ENCODE measurements at regions of chr18 and their contacts with region 1.

Region 1: DNA sequence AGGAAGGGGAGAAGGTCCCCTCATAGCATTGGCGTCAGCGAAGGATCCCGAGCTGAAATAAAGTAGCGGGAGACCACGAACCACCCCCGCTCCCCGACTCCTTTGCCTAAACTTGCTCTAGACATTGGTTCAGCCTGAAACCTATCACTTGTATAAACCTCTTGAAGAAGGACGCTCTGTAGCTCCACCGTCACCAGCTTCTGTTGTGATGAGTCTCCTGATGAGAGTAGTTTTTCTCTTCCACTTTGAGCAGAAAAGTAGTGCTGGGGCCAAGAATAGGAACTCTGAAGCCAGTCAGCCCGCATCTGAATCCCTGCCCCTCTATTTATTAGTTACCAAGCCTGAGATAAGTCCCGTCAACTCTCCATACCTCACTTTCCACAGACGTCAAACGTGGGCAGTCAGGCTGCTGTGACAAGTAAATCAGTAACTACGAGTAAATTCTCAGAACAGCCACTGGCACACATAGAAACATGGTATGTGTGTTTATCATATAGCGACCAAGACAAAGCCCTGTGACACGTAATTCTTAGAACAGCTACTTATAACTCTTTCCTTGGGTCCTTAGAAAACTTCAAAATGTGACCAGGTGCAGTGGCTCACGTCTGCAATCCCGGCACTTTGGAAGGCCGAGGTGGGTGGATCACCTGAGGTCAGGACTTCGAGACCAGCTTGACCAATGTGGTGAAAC is 61.7 kb downstream of the CD226 start:
- DNase-seq: no peak
- H3K4me3 Mint-ChIP-seq: peak overlapping the region; percentile 87
- H3K27ac Mint-ChIP-seq: peak overlapping the region; percentile 100
- H3K4me1 Mint-ChIP-seq: peaks cover 77% of the 10 kb centered on the region
- H3K27me3 Mint-ChIP-seq: no peaks in the 10 kb centered on the region

Region 2: DNA sequence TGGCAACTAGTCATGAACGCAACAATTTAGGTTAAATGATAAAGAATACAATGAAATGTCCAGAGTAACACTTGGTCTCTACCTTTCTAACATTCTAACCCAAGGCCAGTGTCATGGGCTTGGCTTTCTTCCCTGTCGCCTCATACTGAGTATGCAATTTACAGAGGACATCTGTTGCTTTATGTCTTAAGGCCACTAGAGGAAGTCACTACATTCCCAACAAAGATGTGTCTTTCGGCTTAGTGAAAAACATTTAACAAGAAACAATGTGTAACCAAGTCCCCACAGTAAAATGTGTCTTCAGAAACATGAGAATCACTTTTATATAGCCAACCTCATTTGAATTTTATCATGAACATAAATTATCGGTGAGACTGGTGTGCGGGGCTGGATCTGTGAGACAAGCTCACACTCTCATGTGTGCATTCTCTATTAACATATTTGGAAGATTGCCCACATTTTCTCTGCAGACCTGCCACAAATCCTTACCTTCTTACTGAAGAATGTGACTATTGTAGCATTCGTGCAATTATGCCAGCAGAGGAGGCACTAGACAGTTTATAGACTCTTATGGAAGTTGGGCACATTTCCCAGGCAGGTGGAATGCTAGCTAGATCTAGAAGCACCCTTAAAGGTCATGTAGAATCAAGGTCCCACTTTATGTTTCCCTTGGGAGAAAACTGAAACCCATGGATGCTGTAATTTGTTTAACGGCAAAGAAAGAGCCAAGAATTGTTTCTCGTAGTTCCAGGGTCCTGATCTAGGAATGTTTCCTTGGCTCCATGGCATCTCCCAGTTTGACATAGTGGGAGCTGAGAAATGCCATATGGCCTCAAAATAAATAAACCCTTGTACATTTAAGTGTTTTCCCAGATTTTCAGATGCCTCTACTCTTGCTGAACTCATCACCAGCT is 40.1 kb before region 1 on chr18:
- intact Hi-C with region 1: loop called (anchors 2 kb)
- DNase-seq: no peak
- H3K4me3 Mint-ChIP-seq: no peak overlapping the region
- H3K27ac Mint-ChIP-seq: no peak overlapping the region
- H3K4me1 Mint-ChIP-seq: no peaks in the 10 kb centered on the region
- H3K27me3 Mint-ChIP-seq: peaks cover 2% of the 10 kb centered on the region

Region 3: GRCh38 chr18:69898241-69898861 is 12.4 kb after region 1 on chr18:
- intact Hi-C with region 1: loop called (anchors 1 kb)
- DNase-seq: no peak
- H3K4me3 Mint-ChIP-seq: peak overlapping the region; percentile 78
- H3K27ac Mint-ChIP-seq: peak overlapping the region; percentile 97
- H3K4me1 Mint-ChIP-seq: peaks cover 78% of the 10 kb centered on the region
- H3K27me3 Mint-ChIP-seq: no peaks in the 10 kb centered on the region

Region 4: DNA sequence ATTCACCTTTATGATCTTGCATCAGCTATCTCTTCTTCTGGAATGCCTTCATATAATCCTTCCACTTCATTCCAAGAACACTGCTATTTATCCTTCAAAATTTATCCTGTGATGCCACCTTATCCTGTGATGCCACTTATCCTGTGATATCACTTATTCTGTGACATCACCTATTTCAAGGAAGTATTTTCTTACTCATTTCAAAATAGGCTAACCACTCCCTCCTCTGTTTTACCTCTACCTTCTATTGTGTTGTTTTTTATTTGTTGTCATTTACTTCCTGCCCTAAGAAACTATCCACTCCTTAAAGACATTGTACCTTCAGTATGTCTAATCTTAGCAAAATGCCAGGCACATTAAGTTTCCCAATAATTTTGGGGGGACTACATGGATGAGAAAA is 22.9 kb after region 1 on chr18:
- intact Hi-C with region 1: loop called (anchors 1 kb)
- DNase-seq: no peak
- H3K4me3 Mint-ChIP-seq: peak overlapping the region; percentile 40
- H3K27ac Mint-ChIP-seq: peak overlapping the region; percentile 59
- H3K4me1 Mint-ChIP-seq: peaks cover 52% of the 10 kb centered on the region
- H3K27me3 Mint-ChIP-seq: no peaks in the 10 kb centered on the region

Region 5: DNA sequence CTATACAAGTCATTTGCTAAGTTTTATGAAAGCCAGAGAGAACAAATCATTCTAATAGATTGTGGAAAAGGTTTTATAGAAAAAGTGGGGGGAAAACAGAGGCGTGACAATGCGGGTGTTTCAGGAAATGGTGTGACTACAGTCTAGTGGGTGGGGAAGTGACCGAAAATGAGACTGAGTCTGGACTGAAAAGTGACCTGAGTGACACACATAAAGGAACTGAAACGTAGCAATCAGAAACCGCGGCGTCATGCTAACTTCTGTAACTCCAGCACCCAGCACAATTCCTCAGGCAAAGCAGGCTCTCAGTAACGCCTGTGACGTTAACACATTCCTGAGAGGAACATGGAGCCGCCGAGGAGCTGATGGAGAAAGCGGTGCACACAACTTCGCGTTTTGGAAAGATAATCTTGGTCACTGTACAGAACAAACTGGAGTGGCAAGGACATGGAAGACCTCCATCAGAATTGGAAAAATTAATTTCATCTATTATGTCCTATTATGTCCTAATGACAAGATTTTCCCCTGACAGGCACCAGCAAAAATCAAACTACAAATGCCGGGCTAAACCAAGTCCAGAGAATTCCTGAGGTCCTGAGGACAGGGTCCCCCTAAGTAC is 63.0 kb after region 1 on chr18:
- intact Hi-C with region 1: loop called (anchors 1 kb)
- DNase-seq: peak; percentile 40
- H3K4me3 Mint-ChIP-seq: no peak overlapping the region
- H3K27ac Mint-ChIP-seq: no peak overlapping the region
- H3K4me1 Mint-ChIP-seq: peaks cover 35% of the 10 kb centered on the region
- H3K27me3 Mint-ChIP-seq: no peaks in the 10 kb centered on the region

Region 6: DNA sequence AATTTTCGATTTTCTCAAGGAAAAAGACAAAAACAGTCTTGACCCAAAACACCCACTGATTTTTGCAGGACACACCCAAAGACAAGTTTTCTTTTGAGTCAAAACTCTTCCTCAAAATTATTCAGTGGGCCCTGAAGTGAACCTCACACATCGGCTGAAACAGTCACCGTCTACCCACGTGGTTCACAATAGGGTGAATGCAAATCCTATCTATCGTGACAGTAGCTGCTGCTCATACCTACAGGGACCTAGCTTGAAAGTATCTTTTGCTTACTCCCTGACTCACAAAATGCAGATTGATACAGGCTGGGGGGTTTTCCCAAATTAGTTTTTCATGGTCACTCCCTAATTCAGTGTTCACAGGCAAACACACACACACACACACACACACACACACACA is 72.4 kb after region 1 on chr18:
- intact Hi-C with region 1: loop called (anchors 1 kb)
- DNase-seq: no peak
- H3K4me3 Mint-ChIP-seq: no peak overlapping the region
- H3K27ac Mint-ChIP-seq: no peak overlapping the region
- H3K4me1 Mint-ChIP-seq: peaks cover 16% of the 10 kb centered on the region
- H3K27me3 Mint-ChIP-seq: peaks cover 1% of the 10 kb centered on the region